ENCODE measurements at regions of chr3 and their contacts with region 1.

Region 1: GRCh38 chr3:22960105-22960984 is 242.8 kb upstream of the UBE2E2 start:
- DNase-seq: no peak
- H3K4me3 ChIP-seq: no peak overlapping the region
- H3K27ac ChIP-seq: no peak overlapping the region
- H3K4me1 ChIP-seq: peaks cover 0 to 9% (median 7%) of the 10 kb centered on the region in 4 donors
- H3K27me3 ChIP-seq: no peaks in the 10 kb centered on the region
- CTCF ChIP-seq: peak; percentile 56 to 66

Region 2: GRCh38 chr3:21859124-21860081 is 1100.9 kb before region 1 on chr3:
- intact Hi-C with region 1: no loop called
- DNase-seq: no peak
- H3K4me3 ChIP-seq: no peak overlapping the region
- H3K27ac ChIP-seq: no peak overlapping the region
- H3K4me1 ChIP-seq: no peaks in the 10 kb centered on the region
- H3K27me3 ChIP-seq: no peaks in the 10 kb centered on the region
- CTCF ChIP-seq: no peak

Region 3: DNA sequence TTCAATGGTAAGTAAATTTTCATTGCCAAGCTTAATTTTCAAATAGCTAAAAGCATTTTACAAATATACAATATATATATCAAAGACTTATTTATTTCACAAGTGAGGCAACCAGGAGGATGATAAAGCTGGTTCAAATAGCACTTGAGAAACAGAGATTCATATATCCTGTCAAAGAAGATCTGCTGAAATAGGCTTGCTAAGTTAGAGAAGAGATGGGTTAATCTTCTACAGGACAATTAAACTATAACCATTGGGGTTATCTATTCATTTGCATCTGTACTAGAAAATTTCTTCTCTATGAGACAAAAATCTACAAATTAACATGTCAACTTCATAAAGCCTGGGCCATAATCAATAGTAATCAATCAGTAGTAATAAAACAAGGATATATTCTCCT is 395.0 kb before region 1 on chr3:
- intact Hi-C with region 1: loop called (anchors 10 kb)
- DNase-seq: no peak
- H3K4me3 ChIP-seq: no peak overlapping the region
- H3K27ac ChIP-seq: no peak overlapping the region
- H3K4me1 ChIP-seq: no peaks in the 10 kb centered on the region
- H3K27me3 ChIP-seq: no peaks in the 10 kb centered on the region
- CTCF ChIP-seq: no peak

Measured in tibial artery (tissue), 4 donors.